HepG2 (cell line): ENCODE measurements at regions of chr5 and their contacts with region 1.

Region 1: DNA sequence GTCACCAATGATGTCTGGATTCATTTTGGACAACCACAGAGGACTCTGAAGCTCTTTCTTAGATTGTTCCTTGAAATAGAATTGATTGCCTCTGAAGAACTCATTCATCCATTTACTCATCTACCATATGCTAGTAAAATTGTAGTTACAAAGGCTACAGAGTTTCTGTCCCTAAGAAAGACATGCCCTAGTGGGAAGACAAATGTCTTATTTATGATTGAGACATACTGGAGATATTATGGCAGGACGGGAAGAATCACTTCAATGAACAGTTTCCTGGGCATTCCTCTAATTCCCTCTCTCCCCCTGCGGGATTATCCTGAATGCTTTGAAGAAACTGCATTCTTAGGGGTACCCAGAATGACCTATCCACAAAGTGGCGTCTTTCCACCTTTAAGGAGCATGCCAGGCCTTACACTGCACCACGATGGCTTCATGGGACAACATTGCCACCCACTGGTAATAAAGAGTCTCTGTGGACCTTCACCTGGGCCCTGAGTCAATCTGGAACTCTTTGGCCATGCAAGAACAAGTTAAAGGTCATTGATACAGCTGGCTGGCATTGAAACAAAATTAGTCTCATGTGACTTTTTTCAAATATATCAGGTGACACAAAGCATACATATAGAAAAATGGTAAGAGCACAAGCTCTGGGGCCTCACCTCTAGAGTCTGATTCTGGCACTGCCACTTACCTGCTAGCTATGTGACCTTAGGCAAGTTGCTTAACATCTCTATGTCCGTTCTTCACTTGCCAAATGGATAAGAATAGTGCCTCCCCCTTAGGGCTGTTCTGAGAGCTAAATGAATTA is 32.1 kb downstream of the ANKRD55 start:
- DNase-seq: peak; percentile 88
- ATAC-seq: peak; percentile 99
- H3K4me3 ChIP-seq: no peak overlapping the region
- H3K27ac ChIP-seq: no peak overlapping the region
- H3K4me1 ChIP-seq: peaks cover 38% of the 10 kb centered on the region
- H3K27me3 ChIP-seq: no peaks in the 10 kb centered on the region
- CTCF ChIP-seq: peak; percentile 96
- EP300 ChIP-seq: no peak
- POLR2A ChIP-seq: no peak
- RAD21 ChIP-seq: peak; percentile 96

Region 2: GRCh38 chr5:55290991-55291390 is 910.1 kb before region 1 on chr5:
- CTCF ChIA-PET with region 1: no interaction called
- POLR2A ChIA-PET with region 1: no interaction called
- in situ Hi-C with region 1: no loop called
- intact Hi-C with region 1: no loop called
- DNase-seq: no peak
- ATAC-seq: no peak
- H3K4me3 ChIP-seq: no peak overlapping the region
- H3K27ac ChIP-seq: no peak overlapping the region
- H3K4me1 ChIP-seq: no peaks in the 10 kb centered on the region
- H3K27me3 ChIP-seq: no peaks in the 10 kb centered on the region; a peak in 1 of 5 replicates
- CTCF ChIP-seq: no peak
- EP300 ChIP-seq: no peak
- POLR2A ChIP-seq: no peak
- RAD21 ChIP-seq: no peak

Region 3: GRCh38 chr5:55885359-55885758 is 315.7 kb before region 1 on chr5:
- CTCF ChIA-PET with region 1: no interaction called
- POLR2A ChIA-PET with region 1: no interaction called
- in situ Hi-C with region 1: no loop called
- intact Hi-C with region 1: no loop called
- DNase-seq: no peak
- ATAC-seq: peak; percentile 56; the same call in 2 of the 3 replicates
- H3K4me3 ChIP-seq: no peak overlapping the region
- H3K27ac ChIP-seq: no peak overlapping the region
- H3K4me1 ChIP-seq: peaks cover 19% of the 10 kb centered on the region; the same call in 1 of the 2 replicates
- H3K27me3 ChIP-seq: no peaks in the 10 kb centered on the region
- CTCF ChIP-seq: no peak
- EP300 ChIP-seq: no peak
- POLR2A ChIP-seq: no peak
- RAD21 ChIP-seq: no peak

Region 4: DNA sequence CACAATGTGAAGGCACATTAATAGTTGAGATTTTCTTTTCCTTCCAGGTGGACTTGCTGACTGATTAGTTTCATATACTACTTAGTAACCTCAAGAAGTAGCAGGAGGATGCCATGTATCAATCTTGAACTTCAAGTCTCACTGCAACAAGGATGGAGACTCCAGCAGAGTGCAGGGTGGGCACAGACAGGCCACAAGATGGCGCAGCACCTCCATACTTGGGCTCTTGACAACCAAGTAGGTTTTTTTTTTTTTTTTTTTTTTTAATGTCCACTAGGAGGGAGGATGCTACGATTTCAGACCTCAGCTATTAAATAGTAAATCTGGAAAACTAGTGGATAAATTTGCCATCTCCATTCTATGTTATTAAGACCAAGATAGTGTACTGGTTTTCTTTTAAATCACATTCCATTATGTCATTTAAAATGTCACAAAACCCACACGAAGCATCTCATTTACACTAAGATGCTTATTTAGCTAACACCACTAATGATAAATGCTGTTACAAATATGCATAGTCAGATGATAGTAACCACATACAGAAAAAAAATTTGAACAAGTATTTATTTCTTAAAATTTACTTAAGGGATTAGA is 264.9 kb before region 1 on chr5:
- CTCF ChIA-PET with region 1: interaction called, 24 read pairs
- POLR2A ChIA-PET with region 1: interaction called, 18 read pairs
- in situ Hi-C with region 1: no loop called
- intact Hi-C with region 1: loop called (anchors 1 kb)
- DNase-seq: peak; percentile 65
- ATAC-seq: peak; percentile 12
- H3K4me3 ChIP-seq: no peak overlapping the region
- H3K27ac ChIP-seq: no peak overlapping the region
- H3K4me1 ChIP-seq: peaks cover 49% of the 10 kb centered on the region
- H3K27me3 ChIP-seq: no peaks in the 10 kb centered on the region
- CTCF ChIP-seq: peak; percentile 85
- EP300 ChIP-seq: no peak
- POLR2A ChIP-seq: no peak
- RAD21 ChIP-seq: peak; percentile 65

Region 5: DNA sequence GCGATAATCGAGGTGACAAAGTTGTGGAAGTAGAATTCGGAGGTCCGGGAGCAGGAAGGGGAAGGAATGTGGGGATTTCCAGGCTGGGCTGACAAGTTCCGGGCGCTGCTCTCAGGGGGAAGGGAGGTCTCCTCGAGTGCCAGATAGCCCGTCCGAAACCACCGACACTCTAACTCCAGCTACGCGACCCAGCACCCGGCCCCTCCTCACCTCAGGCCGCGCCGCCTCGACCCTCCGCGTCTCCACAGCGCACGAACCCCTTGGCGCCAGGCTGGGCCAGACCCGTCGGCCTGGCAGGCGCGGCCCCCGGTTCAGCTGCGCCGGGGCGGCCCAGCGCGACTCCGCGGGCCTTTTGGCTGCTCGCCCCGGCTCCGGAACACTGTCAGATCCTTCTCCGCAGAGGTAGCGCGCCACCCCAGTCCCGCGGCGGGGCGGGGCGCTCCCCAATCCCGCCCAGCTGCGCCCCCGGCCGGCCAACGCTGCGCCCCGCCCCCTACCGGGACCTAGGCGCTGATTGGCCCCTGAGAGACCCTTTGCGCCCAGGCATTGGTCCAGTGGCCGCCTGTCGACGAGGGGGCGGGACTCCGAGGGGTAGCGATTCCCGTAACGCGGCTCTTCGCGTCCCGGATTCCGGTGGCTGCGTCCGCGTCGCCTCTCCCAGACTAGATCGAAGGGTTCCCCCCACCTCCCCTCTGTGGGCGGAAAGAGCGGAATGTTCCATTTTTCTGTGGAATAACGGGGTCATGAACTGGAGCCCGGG is 206.3 kb before region 1 on chr5 and contains the start of gene IL6ST:
- CTCF ChIA-PET with region 1: no interaction called
- POLR2A ChIA-PET with region 1: interaction called, 7 read pairs
- in situ Hi-C with region 1: loop called (anchors 5 kb)
- intact Hi-C with region 1: no loop called
- DNase-seq: peak; percentile 96
- ATAC-seq: peak; percentile 96
- H3K4me3 ChIP-seq: peak within 1 kb of the TSS; percentile 90 to 99 (median 97)
- H3K27ac ChIP-seq: peak within 1 kb of the TSS; percentile 94
- H3K4me1 ChIP-seq: peaks cover 48% of the 10 kb centered on the region
- H3K27me3 ChIP-seq: peaks cover 0 to 4% of the 10 kb centered on the region in 2 experiments; a peak in 1 of 5 replicates
- CTCF ChIP-seq: peak; percentile 47
- EP300 ChIP-seq: peak in 1 of 2 experiments; percentile 49; a peak in 2 of 4 replicates
- POLR2A ChIP-seq: peak; percentile 60 to 87
- RAD21 ChIP-seq: peak; percentile 68
- total RNA-seq, gene IL6ST: 161 and 166 TPM in 2 replicates

Region 6: GRCh38 chr5:56123531-56124243 is 77.4 kb before region 1 on chr5:
- CTCF ChIA-PET with region 1: no interaction called
- POLR2A ChIA-PET with region 1: interaction called, 6 read pairs
- in situ Hi-C with region 1: no loop called
- intact Hi-C with region 1: loop called (anchors 5 kb)
- DNase-seq: peak; percentile 99
- ATAC-seq: peak; percentile 98
- H3K4me3 ChIP-seq: peak overlapping the region; percentile 6 to 45 (median 29); a peak in 2 of 6 replicates
- H3K27ac ChIP-seq: peak overlapping the region; percentile 86
- H3K4me1 ChIP-seq: peaks cover 73% of the 10 kb centered on the region
- H3K27me3 ChIP-seq: no peaks in the 10 kb centered on the region
- CTCF ChIP-seq: 0 out of 2 replicates have a peak, but pooled peaks have one; percentile 6
- EP300 ChIP-seq: peak in 1 of 2 experiments; percentile 91; a peak in 2 of 4 replicates
- POLR2A ChIP-seq: peak in 1 of 2 experiments; percentile 43; a peak in 1 of 4 replicates
- RAD21 ChIP-seq: no peak

Region 7: GRCh38 chr5:56264417-56265025 is 63.5 kb after region 1 on chr5:
- CTCF ChIA-PET with region 1: no interaction called
- POLR2A ChIA-PET with region 1: no interaction called
- in situ Hi-C with region 1: no loop called
- intact Hi-C with region 1: loop called (anchors 1 kb)
- DNase-seq: peak; percentile 59
- ATAC-seq: peak; percentile 93
- H3K4me3 ChIP-seq: no peak overlapping the region
- H3K27ac ChIP-seq: no peak overlapping the region
- H3K4me1 ChIP-seq: peaks cover 14% of the 10 kb centered on the region
- H3K27me3 ChIP-seq: no peaks in the 10 kb centered on the region; a peak in 1 of 5 replicates
- CTCF ChIP-seq: peak; percentile 85
- EP300 ChIP-seq: no peak
- POLR2A ChIP-seq: no peak
- RAD21 ChIP-seq: peak; percentile 64; the same call in 1 of the 2 replicates